ENCODE measurements at regions of chr6 and their contacts with region 1.

Region 1: GRCh38 chr6:42661540-42662153 is 60.8 kb downstream of the PRPH2 start:
- DNase-seq: peak; percentile 61 to 82 (median 72)
- ATAC-seq: peak; percentile 98
- H3K4me3 ChIP-seq: no peak overlapping the region
- H3K27ac ChIP-seq: no peak overlapping the region
- H3K4me1 ChIP-seq: no peaks in the 10 kb centered on the region
- H3K27me3 ChIP-seq: no peaks in the 10 kb centered on the region
- CTCF ChIP-seq: peak; percentile 86 to 92

Region 2: GRCh38 chr6:42618686-42619085 is 43.0 kb before region 1 on chr6:
- intact Hi-C with region 1: no loop called
- DNase-seq: no peak
- ATAC-seq: no peak
- H3K4me3 ChIP-seq: no peak overlapping the region
- H3K27ac ChIP-seq: no peak overlapping the region
- H3K4me1 ChIP-seq: no peaks in the 10 kb centered on the region
- H3K27me3 ChIP-seq: no peaks in the 10 kb centered on the region
- CTCF ChIP-seq: no peak

Region 3: GRCh38 chr6:42726485-42727086 is 64.9 kb after region 1 on chr6:
- intact Hi-C with region 1: loop called in 1 of 2 experiments (anchors 10 kb)
- DNase-seq: peak; percentile 58 to 90 (median 82)
- ATAC-seq: peak; percentile 99
- H3K4me3 ChIP-seq: peak overlapping the region; percentile 39 to 52
- H3K27ac ChIP-seq: peak overlapping the region; percentile 75 to 86
- H3K4me1 ChIP-seq: peaks cover 0 to 16% of the 10 kb centered on the region in 2 donors
- H3K27me3 ChIP-seq: no peaks in the 10 kb centered on the region
- CTCF ChIP-seq: peak; percentile 87 to 95

Region 4: DNA sequence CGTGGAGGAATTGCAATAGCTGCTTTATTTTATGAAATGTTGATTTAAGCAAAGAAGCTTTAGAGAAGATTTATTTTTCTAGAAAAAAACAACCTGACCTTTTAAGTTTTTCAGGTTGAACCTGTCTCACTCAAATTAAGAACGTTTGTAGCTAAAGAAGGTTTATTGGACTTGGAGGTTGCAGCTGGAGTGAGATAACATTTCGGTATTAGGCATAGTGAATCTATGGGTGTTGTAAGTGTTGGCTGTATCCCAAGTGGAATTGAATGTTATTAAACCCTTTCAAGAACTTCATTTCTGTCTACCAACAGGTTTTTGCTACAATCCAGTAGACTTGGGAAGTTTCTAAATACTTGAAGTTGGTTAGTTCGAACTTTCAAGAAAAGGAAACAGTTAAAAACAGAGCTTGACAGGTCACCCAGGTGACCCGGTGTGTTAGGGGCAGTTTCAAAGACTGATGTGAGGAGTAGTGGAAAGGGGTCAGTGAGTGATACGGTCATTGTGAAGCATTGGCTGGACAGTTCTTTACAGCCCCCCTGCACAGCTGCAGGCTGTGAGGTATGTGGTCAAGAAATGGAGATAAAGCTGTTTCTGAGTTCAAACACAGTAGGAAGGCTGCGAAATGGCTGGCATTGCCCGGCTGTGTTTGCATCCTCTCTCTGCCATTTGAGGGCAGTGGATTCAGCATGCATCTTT is 86.7 kb after region 1 on chr6:
- intact Hi-C with region 1: no loop called
- DNase-seq: no peak
- ATAC-seq: no peak
- H3K4me3 ChIP-seq: peak overlapping the region in 1 of 2 donors; percentile 99
- H3K27ac ChIP-seq: peak overlapping the region in 1 of 2 donors; percentile 95
- H3K4me1 ChIP-seq: peaks cover 5 to 32% of the 10 kb centered on the region in 2 donors
- H3K27me3 ChIP-seq: no peaks in the 10 kb centered on the region
- CTCF ChIP-seq: no peak

Region 5: GRCh38 chr6:42879372-42880239 is 218.0 kb after region 1 on chr6 and contains the start of gene RPL7L1:
- intact Hi-C with region 1: loop called in 1 of 2 experiments (anchors 5 kb)
- DNase-seq: peak; percentile 87 to 94 (median 88)
- ATAC-seq: peak; percentile 97
- H3K4me3 ChIP-seq: peak within 1 kb of the TSS; percentile 47 to 73
- H3K27ac ChIP-seq: peak within 1 kb of the TSS; percentile 89 to 93
- H3K4me1 ChIP-seq: peaks cover 12 to 38% of the 10 kb centered on the region in 2 donors
- H3K27me3 ChIP-seq: no peaks in the 10 kb centered on the region
- CTCF ChIP-seq: peak in 1 of 2 donors; percentile 27
- polyA plus RNA-seq, gene RPL7L1: 98.0 to 122 (median 116) TPM

Measured in left lung (tissue), 14 donors.